Upper lobe of right lung (tissue), 1 donor: ENCODE measurements at regions of chr11 and their contacts with region 1.

Region 1: DNA sequence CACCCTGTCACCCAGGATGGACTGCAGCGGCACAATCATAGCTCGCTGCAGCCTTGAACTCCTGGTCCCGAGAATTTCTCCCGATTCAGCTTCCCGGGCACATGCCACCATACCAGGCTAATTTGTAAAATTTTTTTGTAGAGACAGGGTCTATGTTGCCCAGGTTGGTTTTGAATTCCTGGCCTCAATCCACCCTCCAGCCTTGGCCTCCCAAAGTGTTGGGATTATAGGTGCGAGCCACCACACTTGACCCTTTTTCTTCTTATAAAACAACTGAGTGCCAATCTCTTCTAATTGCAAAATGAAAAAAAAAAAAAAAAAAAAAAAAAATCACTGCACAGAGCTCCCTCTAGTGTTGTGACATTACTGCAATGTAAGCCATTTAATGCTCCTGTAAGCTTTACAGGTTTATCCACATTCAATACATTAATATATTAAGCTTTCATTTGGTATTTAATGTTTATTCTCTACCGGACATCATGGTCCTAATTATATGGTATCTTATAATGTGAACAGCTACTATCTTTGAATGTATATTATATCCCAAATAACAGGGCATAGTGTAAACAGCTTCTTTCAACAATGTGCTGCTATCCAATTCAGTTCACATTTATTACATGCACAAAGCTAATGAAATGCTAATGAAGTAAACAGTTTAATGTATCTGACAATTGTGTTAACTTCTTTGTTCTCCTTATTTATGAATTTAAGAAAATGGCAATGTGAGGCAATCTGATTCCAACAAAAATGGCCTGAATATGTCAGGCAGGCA is 44.6 kb downstream of the COPB1 start:
- DNase-seq: no peak
- ATAC-seq: peak; percentile 57
- H3K4me3 ChIP-seq: no peak overlapping the region
- H3K27ac ChIP-seq: no peak overlapping the region
- H3K4me1 ChIP-seq: no peaks in the 10 kb centered on the region
- H3K27me3 ChIP-seq: no peaks in the 10 kb centered on the region
- CTCF ChIP-seq: peak; percentile 66

Region 2: DNA sequence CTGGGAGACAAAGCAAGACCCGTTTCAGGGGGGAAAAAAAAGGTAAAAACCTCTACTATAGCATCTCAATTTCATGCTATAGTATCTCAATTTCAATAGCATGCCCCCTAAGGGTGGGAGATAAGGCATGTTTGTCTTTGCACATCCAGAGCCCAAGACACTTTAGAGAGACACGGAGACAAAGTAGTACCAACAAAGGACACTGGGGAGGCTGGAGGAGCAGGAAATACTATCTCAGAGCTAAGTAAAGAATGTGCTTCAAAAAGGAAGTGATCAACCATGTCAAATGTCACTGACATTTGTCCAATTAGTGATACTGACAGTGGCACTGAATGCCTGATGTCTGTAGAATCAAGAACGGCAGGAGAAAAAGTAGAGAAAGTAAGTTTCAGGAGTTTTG is 164.6 kb before region 1 on chr11:
- intact Hi-C with region 1: loop called (anchors 10 kb)
- DNase-seq: no peak
- ATAC-seq: no peak
- H3K4me3 ChIP-seq: no peak overlapping the region
- H3K27ac ChIP-seq: no peak overlapping the region
- H3K4me1 ChIP-seq: peaks cover 6% of the 10 kb centered on the region
- H3K27me3 ChIP-seq: no peaks in the 10 kb centered on the region
- CTCF ChIP-seq: no peak

Region 3: GRCh38 chr11:14393889-14394288 is 61.2 kb before region 1 on chr11:
- intact Hi-C with region 1: no loop called
- DNase-seq: no peak
- ATAC-seq: no peak
- H3K4me3 ChIP-seq: no peak overlapping the region
- H3K27ac ChIP-seq: no peak overlapping the region
- H3K4me1 ChIP-seq: no peaks in the 10 kb centered on the region
- H3K27me3 ChIP-seq: no peaks in the 10 kb centered on the region
- CTCF ChIP-seq: no peak